WTC11 (cell line): ENCODE measurements at regions of chr2 and their contacts with region 1.

Region 1: GRCh38 chr2:168118733-168119514 is 128.5 kb downstream of the STK39 start:
- DNase-seq: no peak
- ATAC-seq: peak; percentile 68
- H3K4me3 Mint-ChIP-seq: no peak overlapping the region
- H3K27ac Mint-ChIP-seq: no peak overlapping the region
- H3K4me1 Mint-ChIP-seq: peaks cover 4% of the 10 kb centered on the region; the same call in 1 of the 2 replicates
- H3K27me3 Mint-ChIP-seq: no peaks in the 10 kb centered on the region
- CTCF ChIP-seq: peak; percentile 35

Region 2: GRCh38 chr2:167862787-167863186 is 256.1 kb before region 1 on chr2:
- CTCF ChIA-PET with region 1: interaction called, 15 read pairs
- POLR2A ChIA-PET with region 1: no interaction called
- DNase-seq: no peak
- ATAC-seq: no peak
- H3K4me3 Mint-ChIP-seq: no peak overlapping the region
- H3K27ac Mint-ChIP-seq: peak overlapping the region; percentile 98
- H3K4me1 Mint-ChIP-seq: peaks cover 48% of the 10 kb centered on the region
- H3K27me3 Mint-ChIP-seq: no peaks in the 10 kb centered on the region
- CTCF ChIP-seq: no peak

Region 3: GRCh38 chr2:167944825-167945659 is 173.9 kb before region 1 on chr2:
- CTCF ChIA-PET with region 1: interaction called, 12 read pairs
- POLR2A ChIA-PET with region 1: no interaction called
- DNase-seq: no peak
- ATAC-seq: no peak
- H3K4me3 Mint-ChIP-seq: no peak overlapping the region
- H3K27ac Mint-ChIP-seq: no peak overlapping the region
- H3K4me1 Mint-ChIP-seq: peaks cover 16% of the 10 kb centered on the region
- H3K27me3 Mint-ChIP-seq: no peaks in the 10 kb centered on the region
- CTCF ChIP-seq: no peak

Region 4: DNA sequence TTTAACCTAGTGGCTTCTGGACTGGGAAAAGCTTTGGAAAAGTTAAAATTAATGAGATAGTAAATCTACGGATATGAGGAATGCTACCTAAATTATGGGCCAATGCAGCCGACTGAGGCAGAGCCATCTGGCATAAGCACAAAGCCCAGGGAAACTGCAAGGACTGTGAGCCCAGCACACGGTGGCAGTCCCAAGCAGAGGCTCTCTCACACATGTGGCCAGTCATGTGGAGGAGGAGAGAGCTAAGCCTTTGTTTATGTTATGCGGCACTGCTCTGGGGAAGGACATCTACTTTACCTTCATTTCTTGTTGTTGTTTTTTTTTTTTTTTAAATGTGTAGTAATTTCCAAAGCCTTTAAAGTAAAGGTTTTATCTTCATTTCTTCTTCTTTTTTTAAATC is 138.5 kb before region 1 on chr2:
- CTCF ChIA-PET with region 1: interaction called, 11 read pairs
- POLR2A ChIA-PET with region 1: no interaction called
- DNase-seq: no peak
- ATAC-seq: peak; percentile 66
- H3K4me3 Mint-ChIP-seq: no peak overlapping the region
- H3K27ac Mint-ChIP-seq: no peak overlapping the region
- H3K4me1 Mint-ChIP-seq: peaks cover 15% of the 10 kb centered on the region
- H3K27me3 Mint-ChIP-seq: no peaks in the 10 kb centered on the region
- CTCF ChIP-seq: no peak

Region 5: DNA sequence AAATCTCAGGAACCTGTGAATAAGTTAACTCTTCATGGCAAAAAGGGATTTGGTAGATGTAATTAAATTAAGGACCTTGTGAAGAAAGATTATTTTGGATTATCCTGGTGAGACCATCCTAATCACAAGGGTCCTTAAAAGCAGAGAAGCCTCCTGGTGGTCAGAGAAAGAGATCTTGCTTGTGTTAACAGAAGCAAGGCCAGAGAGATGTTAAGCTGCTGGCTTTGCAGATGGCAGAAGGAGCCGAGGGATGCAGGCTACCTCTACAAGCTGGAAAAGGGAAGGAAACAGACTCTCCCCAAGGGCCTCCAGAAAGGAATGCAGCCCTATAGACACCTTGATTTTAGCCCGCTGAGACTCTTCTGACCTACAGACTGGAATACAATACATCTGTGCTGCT is 68.5 kb before region 1 on chr2:
- CTCF ChIA-PET with region 1: interaction called, 17 read pairs
- POLR2A ChIA-PET with region 1: no interaction called
- DNase-seq: no peak
- ATAC-seq: peak; percentile 89
- H3K4me3 Mint-ChIP-seq: no peak overlapping the region
- H3K27ac Mint-ChIP-seq: no peak overlapping the region
- H3K4me1 Mint-ChIP-seq: peaks cover 16% of the 10 kb centered on the region
- H3K27me3 Mint-ChIP-seq: no peaks in the 10 kb centered on the region
- CTCF ChIP-seq: no peak

Region 6: DNA sequence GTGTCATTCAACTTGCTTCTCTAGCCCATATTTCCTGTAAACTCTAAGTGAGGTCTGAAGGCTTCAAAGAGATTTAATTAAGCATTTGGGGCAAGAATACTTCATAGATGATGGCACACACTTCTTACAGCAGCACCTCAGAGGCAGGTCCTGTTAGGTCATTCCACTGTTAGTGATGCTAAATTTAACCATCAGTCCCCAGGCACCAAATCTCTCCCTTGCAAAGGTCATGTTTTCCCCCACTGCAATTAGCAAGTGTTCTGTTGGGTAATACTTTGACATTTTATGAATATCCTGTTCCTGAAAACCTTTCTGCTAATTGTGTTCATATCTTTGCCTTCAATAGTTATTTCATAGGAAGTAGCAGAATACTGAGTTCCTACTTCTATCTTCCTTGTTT is 11.4 kb after region 1 on chr2:
- CTCF ChIA-PET with region 1: interaction called, 20 read pairs
- POLR2A ChIA-PET with region 1: no interaction called
- DNase-seq: no peak
- ATAC-seq: no peak
- H3K4me3 Mint-ChIP-seq: no peak overlapping the region
- H3K27ac Mint-ChIP-seq: no peak overlapping the region; the same call in 1 of the 2 replicates
- H3K4me1 Mint-ChIP-seq: peaks cover 21% of the 10 kb centered on the region
- H3K27me3 Mint-ChIP-seq: no peaks in the 10 kb centered on the region
- CTCF ChIP-seq: no peak

Region 7: GRCh38 chr2:168336864-168337263 is 217.9 kb after region 1 on chr2:
- CTCF ChIA-PET with region 1: interaction called, 15 read pairs
- POLR2A ChIA-PET with region 1: no interaction called
- DNase-seq: peak; percentile 74
- ATAC-seq: peak; percentile 100
- H3K4me3 Mint-ChIP-seq: no peak overlapping the region
- H3K27ac Mint-ChIP-seq: no peak overlapping the region
- H3K4me1 Mint-ChIP-seq: peaks cover 18% of the 10 kb centered on the region
- H3K27me3 Mint-ChIP-seq: peaks cover 2% of the 10 kb centered on the region; the same call in 1 of the 2 replicates
- CTCF ChIP-seq: peak; percentile 23; the same call in 1 of the 2 replicates